ENCODE measurements at regions of chr12 and their contacts with region 1.

Region 1: DNA sequence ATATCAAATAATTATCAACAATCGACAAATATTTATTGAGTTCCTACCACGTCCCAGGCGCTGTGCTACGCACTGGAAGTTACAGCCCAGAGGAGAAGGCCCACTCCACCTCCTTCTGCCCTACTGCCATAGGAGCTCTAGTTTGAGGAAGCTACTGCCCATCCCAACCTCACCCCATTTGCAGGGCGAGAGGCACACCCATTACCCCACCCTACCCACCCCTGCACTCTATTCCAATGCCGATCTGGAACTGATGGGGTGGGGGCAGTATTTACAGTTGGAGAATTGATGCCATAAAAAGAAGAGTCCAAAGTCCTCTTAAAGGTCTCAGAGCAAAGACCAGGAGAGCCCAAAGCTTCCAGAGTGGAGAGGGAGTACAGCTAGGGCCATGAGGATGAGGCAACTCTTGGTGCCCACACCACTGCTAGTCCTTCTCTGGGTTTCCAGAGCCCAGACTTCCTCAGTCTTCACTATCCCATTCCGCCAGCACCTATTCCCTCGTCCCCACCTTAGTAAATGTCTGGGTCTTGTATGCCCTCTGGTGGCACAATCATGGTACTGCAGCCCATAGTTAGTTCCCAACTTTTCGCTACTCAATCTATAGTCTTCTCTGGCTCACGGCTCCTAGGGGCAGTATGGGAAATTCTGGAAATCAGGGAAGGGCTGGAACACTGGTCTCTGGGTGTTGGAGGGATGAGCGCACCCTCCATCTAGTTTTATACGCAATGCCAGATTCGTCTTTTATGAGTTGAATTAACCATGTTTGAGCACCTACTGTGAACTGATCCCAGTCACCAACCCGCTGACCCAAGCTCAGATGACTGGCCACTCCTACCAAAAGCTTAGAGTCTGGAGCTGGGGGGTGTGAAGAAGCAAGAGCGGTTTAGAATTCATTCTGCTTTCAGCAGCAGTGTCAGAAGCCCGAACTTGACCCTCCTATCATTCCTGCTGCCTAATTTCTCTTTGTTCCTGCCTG is 6.9 kb upstream of the ADCY6 start:
- DNase-seq: peak; percentile 79 to 94
- H3K4me3 ChIP-seq: no peak overlapping the region
- CTCF ChIP-seq: peak in 2 of 3 donors; percentile 64 to 97
- POLR2A ChIP-seq: no peak

Region 2: GRCh38 chr12:47307680-47308399 is 1487.9 kb before region 1 on chr12:
- intact Hi-C with region 1: no loop called
- DNase-seq: no peak
- H3K4me3 ChIP-seq: no peak overlapping the region
- CTCF ChIP-seq: no peak
- POLR2A ChIP-seq: no peak

Region 3: DNA sequence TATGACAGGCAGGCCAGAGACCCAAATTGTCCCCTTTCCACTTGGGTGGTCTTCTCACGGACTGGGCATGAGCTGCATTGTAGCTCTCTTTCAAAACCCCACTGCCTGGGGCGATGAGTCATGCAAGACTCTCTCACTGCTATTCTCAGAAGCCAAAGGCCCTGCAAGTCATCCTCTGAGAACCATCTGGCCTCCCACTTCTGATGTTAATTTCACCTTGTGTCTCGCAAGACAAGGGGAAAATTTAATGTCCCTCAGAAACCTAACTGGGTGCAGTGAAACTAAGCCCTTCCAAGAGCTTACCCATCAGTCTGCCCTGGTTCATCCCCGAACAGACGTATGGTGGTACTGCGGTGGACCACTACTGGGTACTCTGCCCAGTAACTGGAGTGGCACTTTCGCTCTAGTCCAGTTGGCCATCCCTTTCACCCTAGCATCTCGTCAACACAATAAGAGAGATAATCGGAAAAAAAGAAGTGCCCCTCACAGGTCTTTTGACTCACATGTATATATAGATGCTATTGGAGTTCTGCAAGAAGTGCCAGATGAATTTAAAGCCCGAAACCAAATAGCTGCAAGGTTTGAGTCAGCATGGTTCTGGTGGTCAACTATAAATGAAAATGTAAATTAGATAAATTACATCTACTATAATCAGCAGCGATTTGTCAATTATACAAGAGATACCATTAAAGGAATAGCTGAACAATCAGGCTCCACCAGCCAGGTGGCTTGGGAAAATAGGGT is 194.6 kb before region 1 on chr12:
- intact Hi-C with region 1: no loop called
- DNase-seq: no peak
- H3K4me3 ChIP-seq: no peak overlapping the region
- CTCF ChIP-seq: no peak
- POLR2A ChIP-seq: no peak

Region 4: GRCh38 chr12:48758221-48758620 is 37.5 kb before region 1 on chr12:
- intact Hi-C with region 1: loop called (anchors 2 kb)
- DNase-seq: no peak
- H3K4me3 ChIP-seq: no peak overlapping the region
- CTCF ChIP-seq: no peak
- POLR2A ChIP-seq: no peak

Region 5: GRCh38 chr12:48777501-48778400 is 18.0 kb before region 1 on chr12:
- intact Hi-C with region 1: loop called (anchors 1 kb)
- DNase-seq: no peak
- H3K4me3 ChIP-seq: no peak overlapping the region
- CTCF ChIP-seq: no peak
- POLR2A ChIP-seq: no peak